ENCODE measurements at regions of chr17 and their contacts with region 1.

Region 1: GRCh38 chr17:28644985-28645939 is at the start of gene BLTP2:
- DNase-seq: peak; percentile 78 to 91
- H3K4me3 ChIP-seq: peak within 1 kb of the TSS; percentile 74 to 97 (median 88)
- H3K27ac ChIP-seq: peak within 1 kb of the TSS; percentile 50; the same call in 1 of the 2 replicates
- H3K4me1 ChIP-seq: 0 out of 7 replicates have a peak, but pooled peaks cover 0 to 2% (median under 1%) of the 10 kb centered on the region in 4 experiments
- H3K27me3 ChIP-seq: no peaks in the 10 kb centered on the region
- CTCF ChIP-seq: no peak
- EP300 ChIP-seq: no peak
- POLR2A ChIP-seq: peak in 1 of 2 experiments; percentile 69; a peak in 1 of 3 replicates
- RAD21 ChIP-seq: no peak
- total RNA-seq, gene BLTP2: 123 and 140 TPM in 2 replicates

Region 2: GRCh38 chr17:28634206-28634856 is 10.9 kb before region 1 on chr17:
- CTCF ChIA-PET with region 1: interaction called, 13 read pairs
- POLR2A ChIA-PET with region 1: interaction called, 21 read pairs
- DNase-seq: no peak
- H3K4me3 ChIP-seq: no peak overlapping the region
- H3K27ac ChIP-seq: no peak overlapping the region
- H3K4me1 ChIP-seq: no peaks in the 10 kb centered on the region
- H3K27me3 ChIP-seq: no peaks in the 10 kb centered on the region
- CTCF ChIP-seq: no peak
- EP300 ChIP-seq: no peak
- POLR2A ChIP-seq: no peak
- RAD21 ChIP-seq: no peak

Region 3: GRCh38 chr17:28667870-28668269 is 22.6 kb after region 1 on chr17:
- CTCF ChIA-PET with region 1: interaction called, 38 read pairs
- POLR2A ChIA-PET with region 1: interaction called, 55 read pairs
- DNase-seq: no peak
- H3K4me3 ChIP-seq: no peak overlapping the region
- H3K27ac ChIP-seq: no peak overlapping the region
- H3K4me1 ChIP-seq: no peaks in the 10 kb centered on the region; a peak in 3 of 7 replicates
- H3K27me3 ChIP-seq: no peaks in the 10 kb centered on the region
- CTCF ChIP-seq: no peak
- EP300 ChIP-seq: no peak
- POLR2A ChIP-seq: no peak
- RAD21 ChIP-seq: no peak

Region 4: GRCh38 chr17:28701987-28702751 is 56.9 kb after region 1 on chr17:
- CTCF ChIA-PET with region 1: interaction called, 9 read pairs
- POLR2A ChIA-PET with region 1: interaction called, 19 read pairs
- DNase-seq: no peak
- H3K4me3 ChIP-seq: no peak overlapping the region
- H3K27ac ChIP-seq: 0 out of 2 replicates have a peak overlapping the region, but pooled peaks have one; percentile 19
- H3K4me1 ChIP-seq: peaks cover 0 to 11% (median 4%) of the 10 kb centered on the region in 4 experiments; a peak in 4 of 7 replicates
- H3K27me3 ChIP-seq: no peaks in the 10 kb centered on the region
- CTCF ChIP-seq: no peak
- EP300 ChIP-seq: no peak
- POLR2A ChIP-seq: peak in 1 of 2 experiments; percentile 45; a peak in 1 of 3 replicates
- RAD21 ChIP-seq: no peak

Region 5: GRCh38 chr17:28796062-28796461 is 150.8 kb after region 1 on chr17:
- CTCF ChIA-PET with region 1: no interaction called
- POLR2A ChIA-PET with region 1: no interaction called
- DNase-seq: no peak
- H3K4me3 ChIP-seq: no peak overlapping the region
- H3K27ac ChIP-seq: no peak overlapping the region
- H3K4me1 ChIP-seq: no peaks in the 10 kb centered on the region
- H3K27me3 ChIP-seq: no peaks in the 10 kb centered on the region
- CTCF ChIP-seq: no peak
- EP300 ChIP-seq: no peak
- POLR2A ChIP-seq: no peak
- RAD21 ChIP-seq: no peak

Region 6: DNA sequence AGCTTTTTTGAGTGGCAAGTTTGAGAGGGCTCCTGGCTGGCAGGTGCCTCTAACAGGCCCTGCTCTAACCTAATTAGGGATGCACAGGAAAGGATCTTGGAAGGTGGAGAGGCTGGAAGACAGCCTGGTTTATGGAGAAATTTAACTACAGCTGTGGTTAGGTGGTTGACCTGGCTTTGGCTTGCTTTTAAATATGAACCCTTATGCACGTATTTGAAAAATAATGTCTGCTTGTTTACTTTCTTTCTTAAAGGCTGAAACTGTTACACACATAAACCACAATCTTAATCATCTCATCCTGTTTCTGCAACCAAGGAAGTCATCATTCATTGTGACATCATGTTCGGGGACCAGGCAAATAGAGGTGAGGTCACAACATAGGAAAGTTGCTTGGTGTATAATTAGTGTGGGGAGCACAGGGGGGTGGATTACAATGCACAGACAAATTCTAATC is 280.7 kb after region 1 on chr17:
- CTCF ChIA-PET with region 1: no interaction called
- POLR2A ChIA-PET with region 1: no interaction called
- DNase-seq: no peak
- H3K4me3 ChIP-seq: no peak overlapping the region
- H3K27ac ChIP-seq: no peak overlapping the region
- H3K4me1 ChIP-seq: no peaks in the 10 kb centered on the region
- H3K27me3 ChIP-seq: no peaks in the 10 kb centered on the region
- CTCF ChIP-seq: no peak
- EP300 ChIP-seq: no peak
- POLR2A ChIP-seq: no peak
- RAD21 ChIP-seq: no peak